Activated CD8-positive, alpha-beta T cell treated with anti-CD3 and anti-CD28 coated beads for 36 hours (primary cell): ENCODE measurements at regions of chr1 and their contacts with region 1.

Region 1: GRCh38 chr1:203765029-203765837 is at the start of gene LAX1:
- DNase-seq: peak; percentile 92
- ATAC-seq: peak; percentile 86
- H3K4me3 Mint-ChIP-seq: peak within 1 kb of the TSS; percentile 98
- H3K27ac Mint-ChIP-seq: peak within 1 kb of the TSS; percentile 99
- H3K4me1 Mint-ChIP-seq: peaks cover 43% of the 10 kb centered on the region
- H3K27me3 Mint-ChIP-seq: no peaks in the 10 kb centered on the region
- CTCF ChIP-seq: no peak
- total RNA-seq, gene LAX1: 20.7 to 21.1 TPM

Region 2: DNA sequence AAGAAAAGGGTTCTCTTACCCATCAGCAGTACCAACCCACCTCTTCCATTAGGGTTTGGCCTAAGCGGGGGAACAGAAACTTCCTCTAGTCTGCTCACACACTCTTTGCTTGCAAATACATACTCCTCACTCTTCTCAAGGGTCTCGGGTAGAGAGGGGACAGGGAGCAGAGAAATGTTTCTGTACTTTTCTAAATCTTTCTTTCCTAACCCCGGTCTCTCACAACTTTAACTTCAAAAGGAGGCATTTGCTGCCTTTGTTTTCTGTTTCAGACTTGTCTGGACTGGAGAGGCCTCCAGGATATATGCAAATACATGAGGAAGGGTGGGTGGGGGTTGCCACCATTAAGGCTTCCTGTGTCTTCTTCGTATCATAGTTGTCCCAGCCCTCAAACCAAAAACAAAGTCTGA is 10.8 kb before region 1 on chr1:
- CTCF ChIA-PET with region 1: no interaction called
- POLR2A ChIA-PET with region 1: interaction called, 39 read pairs
- intact Hi-C with region 1: no loop called
- DNase-seq: peak; percentile 65
- ATAC-seq: peak; percentile 76
- H3K4me3 Mint-ChIP-seq: peak overlapping the region; percentile 23
- H3K27ac Mint-ChIP-seq: peak overlapping the region; percentile 91
- H3K4me1 Mint-ChIP-seq: peaks cover 30% of the 10 kb centered on the region
- H3K27me3 Mint-ChIP-seq: no peaks in the 10 kb centered on the region
- CTCF ChIP-seq: no peak

Region 3: DNA sequence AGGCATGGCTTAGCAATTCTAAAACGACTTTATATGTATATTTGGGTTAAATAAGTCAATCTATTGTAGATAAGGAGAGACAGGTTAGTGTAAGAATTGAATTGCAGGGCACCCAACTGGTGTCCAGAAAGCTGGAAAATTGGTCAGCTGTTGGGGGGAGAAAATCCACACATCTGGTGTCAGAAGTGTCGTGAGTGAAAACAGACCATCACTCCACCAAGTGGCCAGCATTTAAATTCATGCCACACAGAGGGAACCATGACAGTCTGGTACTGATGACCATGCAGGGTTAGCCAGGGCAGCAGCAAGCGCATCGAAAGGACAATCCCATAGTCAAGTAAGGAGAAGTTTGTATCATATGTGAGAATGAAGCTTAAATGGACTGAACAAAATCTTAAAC is 11.4 kb after region 1 on chr1:
- CTCF ChIA-PET with region 1: interaction called, 10 read pairs
- POLR2A ChIA-PET with region 1: interaction called, 32 read pairs
- intact Hi-C with region 1: no loop called
- DNase-seq: no peak
- ATAC-seq: no peak
- H3K4me3 Mint-ChIP-seq: no peak overlapping the region
- H3K27ac Mint-ChIP-seq: no peak overlapping the region
- H3K4me1 Mint-ChIP-seq: peaks cover 8% of the 10 kb centered on the region
- H3K27me3 Mint-ChIP-seq: no peaks in the 10 kb centered on the region
- CTCF ChIP-seq: no peak

Region 4: DNA sequence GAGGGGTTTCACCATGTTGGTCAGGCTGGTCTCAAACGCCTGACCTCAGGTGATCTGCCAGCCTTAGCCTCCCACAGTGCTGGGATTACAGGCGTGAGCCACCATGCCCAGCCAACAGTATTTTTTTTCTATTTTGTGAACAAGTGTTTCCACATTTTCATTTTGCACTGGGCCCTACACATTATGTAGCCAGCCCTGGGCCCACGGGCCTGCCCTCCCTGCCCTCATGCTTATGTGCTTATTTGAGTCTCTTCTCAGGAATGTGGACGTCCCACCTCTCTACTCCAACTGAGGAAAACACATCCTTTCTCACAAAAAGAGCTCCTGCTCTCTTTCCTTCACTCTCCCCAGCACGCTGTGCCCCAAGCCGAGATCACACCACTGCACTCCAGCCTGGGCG is 16.7 kb after region 1 on chr1:
- CTCF ChIA-PET with region 1: interaction called, 10 read pairs
- POLR2A ChIA-PET with region 1: interaction called, 32 read pairs
- intact Hi-C with region 1: no loop called
- DNase-seq: no peak
- ATAC-seq: no peak
- H3K4me3 Mint-ChIP-seq: no peak overlapping the region
- H3K27ac Mint-ChIP-seq: no peak overlapping the region
- H3K4me1 Mint-ChIP-seq: peaks cover under 1% of the 10 kb centered on the region
- H3K27me3 Mint-ChIP-seq: no peaks in the 10 kb centered on the region
- CTCF ChIP-seq: no peak

Region 5: DNA sequence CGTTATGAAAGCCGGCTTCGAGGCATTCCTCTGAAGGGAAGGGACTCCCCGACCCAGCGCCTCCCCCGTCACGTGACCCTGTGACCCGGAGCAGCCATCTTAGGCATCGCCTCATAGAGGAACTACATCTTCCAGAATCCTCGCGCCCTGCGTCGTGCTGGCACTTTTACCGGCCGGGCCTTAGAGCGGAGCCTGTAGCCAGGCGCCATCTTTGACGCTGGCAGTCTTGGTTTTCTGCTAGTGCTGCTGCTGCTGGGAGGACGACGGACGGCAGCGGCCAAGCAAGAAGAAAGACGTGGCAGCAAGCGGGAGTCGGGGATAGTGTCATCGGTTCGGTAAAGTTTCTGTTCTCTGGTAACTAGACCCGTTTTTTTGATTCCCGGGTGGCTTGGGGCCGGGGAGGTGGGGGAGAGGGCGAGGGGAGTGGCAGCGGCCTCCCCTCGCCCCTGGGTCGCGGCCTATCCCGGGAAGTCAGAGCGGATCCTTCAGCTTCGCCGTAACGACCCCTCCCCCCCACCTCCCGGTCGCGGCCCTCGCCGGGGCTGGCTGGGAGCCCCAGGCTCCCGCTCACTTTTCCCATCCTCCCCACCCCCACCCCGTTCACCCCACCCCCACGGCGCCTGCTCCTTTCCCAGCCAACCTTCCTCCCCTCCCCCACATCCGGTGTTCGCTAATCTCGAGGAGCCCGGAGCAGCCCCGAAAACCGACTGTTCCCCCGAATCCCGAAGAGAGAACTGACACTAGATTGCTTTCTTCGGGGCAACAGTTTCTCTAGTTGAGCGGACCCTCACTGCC is 30.4 kb after region 1 on chr1 and contains the starts of genes ZBED6 and ZC3H11A:
- CTCF ChIA-PET with region 1: interaction called, 3 read pairs
- POLR2A ChIA-PET with region 1: interaction called, 25 read pairs
- intact Hi-C with region 1: no loop called
- DNase-seq: peak; percentile 100
- ATAC-seq: peak; percentile 99
- H3K4me3 Mint-ChIP-seq: peak within 1 kb of the TSS; percentile 90
- H3K27ac Mint-ChIP-seq: peak within 1 kb of the TSS; percentile 98
- H3K4me1 Mint-ChIP-seq: peaks cover 47% of the 10 kb centered on the region
- H3K27me3 Mint-ChIP-seq: no peaks in the 10 kb centered on the region
- CTCF ChIP-seq: no peak
- total RNA-seq, gene ZBED6: 17.3 to 17.7 TPM
- total RNA-seq, gene ZC3H11A: 77.9 to 83.1 TPM

Region 6: GRCh38 chr1:203996126-203996525 is 230.9 kb after region 1 on chr1:
- CTCF ChIA-PET with region 1: no interaction called
- POLR2A ChIA-PET with region 1: no interaction called
- intact Hi-C with region 1: no loop called
- DNase-seq: no peak
- ATAC-seq: no peak
- H3K4me3 Mint-ChIP-seq: no peak overlapping the region
- H3K27ac Mint-ChIP-seq: no peak overlapping the region
- H3K4me1 Mint-ChIP-seq: peaks cover 4% of the 10 kb centered on the region
- H3K27me3 Mint-ChIP-seq: peaks cover 2% of the 10 kb centered on the region
- CTCF ChIP-seq: no peak

Region 7: GRCh38 chr1:204162231-204163074 is 397.2 kb after region 1 on chr1:
- CTCF ChIA-PET with region 1: no interaction called
- POLR2A ChIA-PET with region 1: no interaction called
- intact Hi-C with region 1: no loop called
- DNase-seq: peak; percentile 86
- ATAC-seq: peak; percentile 98
- H3K4me3 Mint-ChIP-seq: no peak overlapping the region
- H3K27ac Mint-ChIP-seq: no peak overlapping the region
- H3K4me1 Mint-ChIP-seq: peaks cover 2% of the 10 kb centered on the region
- H3K27me3 Mint-ChIP-seq: peaks cover 7% of the 10 kb centered on the region
- CTCF ChIP-seq: peak; percentile 96